Transverse colon (tissue), 4 donors: ENCODE measurements at regions of chr10 and their contacts with region 1.

Region 1: GRCh38 chr10:132637477-132638129 is 100.0 kb downstream of the INPP5A start:
- DNase-seq: no peak
- H3K4me3 ChIP-seq: no peak overlapping the region
- H3K27ac ChIP-seq: peak overlapping the region in 3 of 4 donors; percentile 6 to 35 (median 19)
- H3K4me1 ChIP-seq: peaks cover 15 to 53% (median 42%) of the 10 kb centered on the region in 4 donors
- H3K27me3 ChIP-seq: no peaks in the 10 kb centered on the region
- CTCF ChIP-seq: peak; percentile 60 to 86 (median 66)
- EP300 ChIP-seq: no peak
- POLR2A ChIP-seq: no peak

Region 2: GRCh38 chr10:131891196-131891928 is 746.2 kb before region 1 on chr10:
- in situ Hi-C with region 1: no loop called
- intact Hi-C with region 1: no loop called
- DNase-seq: no peak
- H3K4me3 ChIP-seq: no peak overlapping the region
- H3K27ac ChIP-seq: no peak overlapping the region
- H3K4me1 ChIP-seq: no peaks in the 10 kb centered on the region
- H3K27me3 ChIP-seq: peaks cover 45% of the 10 kb centered on the region
- CTCF ChIP-seq: no peak
- EP300 ChIP-seq: no peak
- POLR2A ChIP-seq: no peak

Region 3: DNA sequence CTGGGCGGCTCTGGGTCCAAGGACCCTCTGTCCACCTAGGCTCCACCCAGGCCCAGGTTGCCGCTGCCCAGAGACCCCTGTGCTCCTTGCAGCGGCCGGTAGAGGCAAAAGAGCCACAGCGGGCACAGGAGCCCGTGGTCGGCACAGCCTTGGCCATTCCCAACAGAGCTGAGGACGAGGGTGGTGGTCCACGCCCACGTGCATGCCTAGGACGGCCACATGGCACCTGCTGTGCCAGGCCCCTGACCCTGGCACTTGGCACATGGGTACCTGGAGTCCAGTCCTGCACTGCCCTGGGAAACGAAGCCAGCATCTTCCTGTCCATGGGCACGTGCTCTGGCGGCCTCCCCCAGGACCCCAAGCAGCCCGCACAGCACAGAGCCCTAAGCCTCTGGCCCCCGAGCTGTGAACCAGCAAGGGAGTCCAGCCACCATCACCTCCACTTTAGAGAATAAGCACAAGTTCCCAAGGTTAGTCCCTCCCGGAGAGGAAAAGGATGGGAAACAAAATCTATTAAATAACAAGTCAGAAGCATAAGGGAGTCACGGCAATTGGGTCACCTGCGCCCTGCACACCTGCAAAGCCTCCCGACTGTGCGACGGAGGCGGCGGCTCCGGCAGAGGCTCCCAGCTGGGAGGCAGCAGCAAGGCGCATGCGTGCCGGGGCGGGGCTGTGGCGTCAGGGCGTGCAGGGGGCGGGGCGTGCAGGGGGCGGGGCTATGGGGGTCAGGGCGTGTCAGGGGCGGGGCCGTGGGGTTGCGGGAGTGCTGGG is 389.0 kb before region 1 on chr10:
- in situ Hi-C with region 1: loop called in 1 of 4 experiments (anchors 25 kb)
- intact Hi-C with region 1: no loop called
- DNase-seq: peak; percentile 53
- H3K4me3 ChIP-seq: peak overlapping the region in 1 of 4 donors; percentile 25
- H3K27ac ChIP-seq: no peak overlapping the region
- H3K4me1 ChIP-seq: peaks cover 0 to 4% (median 2%) of the 10 kb centered on the region in 4 donors
- H3K27me3 ChIP-seq: no peaks in the 10 kb centered on the region
- CTCF ChIP-seq: no peak
- EP300 ChIP-seq: no peak
- POLR2A ChIP-seq: no peak

Region 4: DNA sequence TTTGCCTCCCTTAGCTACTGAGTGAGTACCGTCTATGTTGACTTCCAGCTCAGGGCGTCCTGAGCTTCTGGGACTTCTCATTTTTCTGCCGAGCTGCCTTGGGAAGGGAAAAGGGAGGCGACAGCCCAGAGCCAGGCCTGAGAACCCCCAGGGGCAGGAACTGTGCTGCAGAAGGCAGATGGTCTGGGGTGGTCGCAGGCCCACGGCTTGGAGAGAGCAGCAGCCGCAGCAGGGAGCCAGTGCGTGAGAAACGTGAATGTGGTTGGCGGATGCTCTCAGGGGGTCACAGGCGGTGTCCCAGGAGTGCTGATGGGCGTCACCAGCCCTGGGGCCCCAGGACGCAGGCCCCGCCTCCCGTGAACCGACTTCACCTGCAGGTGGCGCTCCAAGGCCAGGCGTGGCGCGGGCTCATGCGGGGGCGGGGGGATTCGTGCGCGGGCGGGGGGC is 249.8 kb before region 1 on chr10:
- in situ Hi-C with region 1: loop called in 3 of 4 experiments (anchors 10 to 25 kb)
- intact Hi-C with region 1: no loop called
- DNase-seq: peak; percentile 84
- H3K4me3 ChIP-seq: peak overlapping the region in 1 of 4 donors; percentile 27
- H3K27ac ChIP-seq: peak overlapping the region in 3 of 4 donors; percentile 28 to 48 (median 39)
- H3K4me1 ChIP-seq: peaks cover 5 to 13% (median 11%) of the 10 kb centered on the region in 4 donors
- H3K27me3 ChIP-seq: no peaks in the 10 kb centered on the region
- CTCF ChIP-seq: peak; percentile 60 to 81 (median 66)
- EP300 ChIP-seq: no peak
- POLR2A ChIP-seq: no peak

Region 5: DNA sequence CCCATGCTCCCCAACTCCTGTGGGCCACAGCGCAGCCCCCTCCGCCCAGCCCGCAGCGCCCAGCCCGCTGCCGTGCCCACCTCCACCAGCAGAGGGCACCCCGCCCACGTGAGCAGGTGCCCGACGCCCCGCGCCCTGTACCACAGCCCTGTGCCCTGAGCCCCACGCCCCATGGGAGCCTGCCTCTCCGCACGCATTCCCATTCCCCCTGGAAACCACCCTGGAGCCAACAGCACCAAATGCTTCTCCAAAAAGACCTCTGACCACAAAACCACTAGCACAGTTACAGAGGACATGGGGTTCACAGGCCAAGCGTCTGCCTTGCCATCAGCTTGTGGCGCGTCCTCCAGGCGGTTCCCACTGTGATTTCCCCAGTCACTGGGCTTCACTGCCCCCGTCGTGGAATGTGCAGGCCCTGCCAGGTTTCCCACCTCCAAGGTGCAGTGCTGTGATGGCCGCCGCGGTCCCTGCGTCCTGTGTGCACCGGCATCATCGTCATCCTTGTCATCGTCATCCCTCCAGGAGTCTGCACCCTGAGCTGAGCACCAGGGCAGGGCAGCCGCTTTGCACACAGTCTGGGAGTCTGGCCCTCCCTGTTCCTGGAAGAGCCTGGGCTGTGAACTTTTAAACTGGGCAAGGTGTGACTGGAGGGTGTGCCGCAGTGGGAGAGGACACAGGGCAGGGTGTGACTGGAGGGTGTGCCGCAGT is 178.9 kb before region 1 on chr10:
- in situ Hi-C with region 1: loop called (anchors 5 to 10 kb)
- intact Hi-C with region 1: loop called (anchors 1 kb)
- DNase-seq: peak; percentile 88
- H3K4me3 ChIP-seq: no peak overlapping the region
- H3K27ac ChIP-seq: peak overlapping the region; percentile 88 to 91 (median 90)
- H3K4me1 ChIP-seq: peaks cover 37 to 87% (median 75%) of the 10 kb centered on the region in 4 donors
- H3K27me3 ChIP-seq: no peaks in the 10 kb centered on the region
- CTCF ChIP-seq: peak; percentile 95 to 99 (median 99)
- EP300 ChIP-seq: peak; percentile 79
- POLR2A ChIP-seq: no peak

Region 6: DNA sequence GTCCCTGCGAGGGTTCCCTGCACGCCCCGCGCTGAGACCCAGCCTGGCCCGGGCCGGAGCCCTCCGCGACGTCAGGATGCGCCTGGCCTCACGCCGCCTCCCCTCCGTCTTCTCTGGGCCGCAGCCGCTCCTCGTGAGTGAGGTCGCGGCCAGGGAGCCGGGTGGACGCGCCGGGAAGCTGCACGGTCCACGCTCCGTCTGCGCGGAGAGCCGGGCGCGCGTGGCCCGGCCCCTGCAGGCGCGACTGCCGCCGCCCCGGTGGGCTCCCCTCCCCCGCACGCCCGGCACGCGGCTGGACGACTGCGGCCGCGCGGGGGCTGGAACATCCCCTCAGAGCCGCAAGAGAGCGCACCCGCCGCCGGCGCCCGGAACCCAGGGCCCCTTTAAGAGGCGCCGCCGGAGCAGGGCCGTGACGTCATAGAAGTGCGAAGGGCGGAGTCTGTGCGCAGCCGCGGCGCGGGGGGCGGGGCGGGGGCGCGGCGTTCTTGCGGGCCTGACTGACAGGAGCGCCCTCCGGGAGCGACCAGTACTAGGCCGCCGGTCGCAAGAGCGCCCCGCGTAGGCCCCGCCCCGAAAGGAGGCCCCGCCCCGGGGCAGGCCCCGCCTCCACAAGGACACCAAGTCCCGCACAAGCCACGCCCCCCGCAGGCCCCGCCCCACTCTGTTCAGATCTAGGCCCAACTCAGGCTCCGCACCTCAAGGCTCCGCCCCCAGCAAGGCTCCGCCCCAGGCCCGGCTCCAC is 100.5 kb before region 1 on chr10:
- in situ Hi-C with region 1: loop called in 2 of 4 experiments (anchors 10 to 25 kb)
- intact Hi-C with region 1: loop called (anchors 5 kb)
- DNase-seq: peak; percentile 100
- H3K4me3 ChIP-seq: peak overlapping the region; percentile 53 to 69 (median 64)
- H3K27ac ChIP-seq: peak overlapping the region; percentile 87 to 95 (median 92)
- H3K4me1 ChIP-seq: peaks cover 11 to 54% (median 47%) of the 10 kb centered on the region in 4 donors
- H3K27me3 ChIP-seq: no peaks in the 10 kb centered on the region
- CTCF ChIP-seq: peak in 2 of 5 experiments; percentile 19 to 20
- EP300 ChIP-seq: no peak
- POLR2A ChIP-seq: peak; percentile 41

Region 7: DNA sequence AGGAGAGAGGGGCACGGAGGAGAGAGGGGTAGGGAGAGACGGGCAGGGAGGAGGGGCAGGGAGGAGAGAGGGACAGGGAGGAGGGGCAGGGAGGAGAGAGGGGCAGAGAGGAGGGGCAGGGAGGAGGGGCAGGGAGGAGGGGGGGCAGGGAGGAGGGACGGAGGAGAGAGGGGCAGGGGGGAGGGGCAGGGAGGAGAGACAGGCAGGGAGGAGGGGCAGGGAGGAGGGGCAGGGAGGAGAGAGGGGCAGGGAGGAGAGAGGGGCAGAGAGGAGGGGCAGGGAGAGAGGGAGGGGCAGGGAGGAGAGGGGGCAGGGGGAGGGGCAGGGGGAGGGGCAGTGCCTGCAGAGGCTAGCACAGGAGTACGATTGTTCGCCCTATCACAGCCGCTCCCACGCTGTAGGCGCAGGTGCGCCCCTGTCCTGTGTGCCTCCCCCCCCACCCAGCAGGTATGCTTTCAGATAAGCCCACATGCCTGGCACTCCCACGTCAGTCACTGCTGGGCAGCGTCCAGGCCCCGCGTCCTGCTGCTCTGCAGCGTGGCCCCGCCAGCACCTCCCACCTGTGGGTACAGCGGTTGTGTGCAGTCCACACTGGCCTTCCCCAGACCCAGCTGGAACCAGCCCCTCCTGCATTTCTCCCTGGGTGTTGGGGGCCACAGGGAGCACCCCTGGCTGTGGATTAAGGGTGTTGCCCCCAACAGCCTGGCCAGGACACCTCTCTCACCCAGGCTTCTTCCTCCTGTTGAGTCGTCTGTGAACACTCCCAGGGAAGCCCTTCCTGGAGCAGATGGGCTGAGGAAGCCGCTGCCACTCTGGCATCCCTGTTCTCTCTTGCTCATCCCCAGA is 137.5 kb after region 1 on chr10:
- in situ Hi-C with region 1: no loop called
- intact Hi-C with region 1: no loop called
- DNase-seq: peak; percentile 69
- H3K4me3 ChIP-seq: no peak overlapping the region
- H3K27ac ChIP-seq: peak overlapping the region in 1 of 4 donors; percentile 75
- H3K4me1 ChIP-seq: peaks cover 0 to 11% (median 4%) of the 10 kb centered on the region in 4 donors
- H3K27me3 ChIP-seq: peaks cover 2% of the 10 kb centered on the region
- CTCF ChIP-seq: no peak
- EP300 ChIP-seq: no peak
- POLR2A ChIP-seq: no peak